ENCODE measurements at regions of chr19 and their contacts with region 1.

Region 1: DNA sequence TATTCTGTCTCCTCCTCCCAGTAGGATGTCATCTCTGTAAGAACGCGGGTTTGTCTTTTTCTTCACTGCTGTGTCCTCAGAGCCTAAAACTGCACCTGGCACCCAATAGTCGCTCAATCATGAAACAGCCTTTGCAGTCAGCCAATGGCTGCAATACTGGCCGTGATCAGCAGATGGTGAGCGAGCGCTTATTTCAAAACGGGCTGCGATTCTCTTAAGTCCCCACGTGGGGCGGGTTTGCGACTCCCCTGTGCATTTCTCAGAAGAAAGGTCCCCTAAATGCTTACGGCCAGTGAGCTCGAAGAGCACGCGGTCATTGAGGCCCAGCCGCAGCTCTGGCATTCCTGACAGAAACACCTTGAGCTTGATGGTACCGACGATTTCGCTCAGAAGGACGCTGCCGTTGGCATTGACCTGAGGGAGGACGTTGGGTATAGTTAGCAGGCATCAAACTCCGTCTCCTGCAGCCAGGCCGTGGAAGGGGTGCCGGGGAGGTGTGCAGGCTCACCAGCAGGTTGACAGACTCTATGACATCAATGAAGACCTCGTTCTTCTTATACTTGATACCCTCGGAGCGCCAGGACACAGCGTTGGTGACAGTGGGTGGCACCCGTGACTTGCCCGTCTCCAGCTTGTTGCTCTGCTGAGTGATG is 6.0 kb downstream of the AP1M2 start:
- DNase-seq: peak; percentile 95
- H3K4me3 Mint-ChIP-seq: no peak overlapping the region
- H3K27ac Mint-ChIP-seq: no peak overlapping the region
- H3K4me1 Mint-ChIP-seq: peaks cover 17% of the 10 kb centered on the region
- H3K27me3 Mint-ChIP-seq: peaks cover 43% of the 10 kb centered on the region

Region 2: GRCh38 chr19:10593820-10594637 is 12.9 kb after region 1 on chr19:
- CTCF ChIA-PET with region 1: interaction called, 17 read pairs
- DNase-seq: no peak
- H3K4me3 Mint-ChIP-seq: no peak overlapping the region
- H3K27ac Mint-ChIP-seq: peak overlapping the region; percentile 6
- H3K4me1 Mint-ChIP-seq: peaks cover 25% of the 10 kb centered on the region
- H3K27me3 Mint-ChIP-seq: peaks cover 45% of the 10 kb centered on the region

Region 3: DNA sequence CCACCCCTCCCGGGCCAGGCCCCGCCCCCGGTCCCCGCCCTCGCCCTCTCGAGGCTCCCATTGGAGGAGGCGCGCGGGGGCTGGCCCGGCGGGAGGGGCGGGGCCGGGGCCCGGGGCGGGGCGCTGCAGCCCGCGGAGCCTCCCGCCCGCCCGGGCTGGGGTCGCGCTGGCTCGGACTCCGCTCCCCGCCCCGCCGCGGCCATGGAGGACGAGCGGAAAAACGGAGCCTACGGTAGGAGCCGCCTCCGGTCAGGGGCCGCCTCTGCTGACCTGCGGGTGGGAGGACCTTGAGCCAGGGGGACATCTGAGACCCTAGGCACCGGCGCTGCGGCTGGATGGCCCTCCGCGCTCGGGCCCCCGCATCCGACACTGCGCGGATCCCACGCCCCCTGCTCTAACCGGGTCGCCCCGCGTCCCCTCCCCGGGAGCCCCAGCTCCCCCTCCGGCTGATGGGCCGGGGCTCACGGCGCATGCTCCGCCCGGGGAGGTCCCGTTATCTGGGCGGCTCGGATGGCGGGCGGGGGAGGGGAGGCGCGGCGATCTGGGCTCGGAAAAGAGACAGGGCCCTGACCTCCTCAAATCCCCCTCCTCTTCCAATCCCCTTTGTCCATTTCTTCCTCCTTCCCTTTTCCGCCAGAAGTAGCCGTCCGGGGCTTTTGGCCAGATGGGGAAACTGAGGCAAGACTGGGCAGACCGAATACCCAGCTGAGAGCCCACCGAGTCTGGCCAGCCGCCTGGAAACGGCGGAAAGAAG is 21.4 kb after region 1 on chr19:
- CTCF ChIA-PET with region 1: interaction called, 29 read pairs
- DNase-seq: peak; percentile 91
- H3K4me3 Mint-ChIP-seq: peak overlapping the region; percentile 99
- H3K27ac Mint-ChIP-seq: peak overlapping the region; percentile 100
- H3K4me1 Mint-ChIP-seq: peaks cover 35% of the 10 kb centered on the region
- H3K27me3 Mint-ChIP-seq: peaks cover 28% of the 10 kb centered on the region

Region 4: GRCh38 chr19:10653715-10654492 is 72.8 kb after region 1 on chr19 and contains the start of gene ILF3:
- CTCF ChIA-PET with region 1: interaction called, 299 read pairs
- DNase-seq: peak; percentile 100
- H3K4me3 Mint-ChIP-seq: peak within 1 kb of the TSS; percentile 93
- H3K27ac Mint-ChIP-seq: peak within 1 kb of the TSS; percentile 98
- H3K4me1 Mint-ChIP-seq: peaks cover 40% of the 10 kb centered on the region
- H3K27me3 Mint-ChIP-seq: peaks cover 3% of the 10 kb centered on the region

Region 5: DNA sequence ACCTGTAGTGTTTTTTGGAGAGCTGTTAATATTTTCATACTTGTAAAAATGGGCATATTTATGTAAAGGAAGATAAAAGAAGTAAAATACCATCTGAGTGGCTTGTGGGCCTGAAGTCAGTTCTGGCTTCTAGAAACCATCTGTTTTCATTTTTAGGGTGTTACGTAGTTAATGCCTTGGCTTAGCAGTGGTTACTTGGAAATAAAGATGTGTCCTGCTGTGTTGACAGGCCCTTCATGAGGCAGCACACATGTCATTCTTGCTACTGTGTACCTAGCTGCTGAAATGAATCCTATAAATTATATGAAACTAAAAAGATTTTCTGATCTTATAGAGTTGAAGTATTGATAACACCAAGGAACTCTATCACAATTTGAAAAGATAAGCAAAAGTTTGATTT is 89.1 kb after region 1 on chr19:
- CTCF ChIA-PET with region 1: interaction called, 13 read pairs
- DNase-seq: no peak
- H3K4me3 Mint-ChIP-seq: no peak overlapping the region
- H3K27ac Mint-ChIP-seq: no peak overlapping the region
- H3K4me1 Mint-ChIP-seq: peaks cover 12% of the 10 kb centered on the region
- H3K27me3 Mint-ChIP-seq: no peaks in the 10 kb centered on the region